Psoas muscle (tissue), 8 donors: ENCODE measurements at regions of chr13 and their contacts with region 1.

Region 1: GRCh38 chr13:110907951-110908898 is 6.6 kb downstream of the ANKRD10 start:
- DNase-seq: no peak
- ATAC-seq: peak in 3 of 4 donors; percentile 31 to 61 (median 38)
- H3K4me3 ChIP-seq: peak overlapping the region; percentile 40
- H3K27ac ChIP-seq: peak overlapping the region; percentile 99
- H3K4me1 ChIP-seq: peaks cover 83% of the 10 kb centered on the region
- H3K27me3 ChIP-seq: no peaks in the 10 kb centered on the region
- CTCF ChIP-seq: no peak

Region 2: DNA sequence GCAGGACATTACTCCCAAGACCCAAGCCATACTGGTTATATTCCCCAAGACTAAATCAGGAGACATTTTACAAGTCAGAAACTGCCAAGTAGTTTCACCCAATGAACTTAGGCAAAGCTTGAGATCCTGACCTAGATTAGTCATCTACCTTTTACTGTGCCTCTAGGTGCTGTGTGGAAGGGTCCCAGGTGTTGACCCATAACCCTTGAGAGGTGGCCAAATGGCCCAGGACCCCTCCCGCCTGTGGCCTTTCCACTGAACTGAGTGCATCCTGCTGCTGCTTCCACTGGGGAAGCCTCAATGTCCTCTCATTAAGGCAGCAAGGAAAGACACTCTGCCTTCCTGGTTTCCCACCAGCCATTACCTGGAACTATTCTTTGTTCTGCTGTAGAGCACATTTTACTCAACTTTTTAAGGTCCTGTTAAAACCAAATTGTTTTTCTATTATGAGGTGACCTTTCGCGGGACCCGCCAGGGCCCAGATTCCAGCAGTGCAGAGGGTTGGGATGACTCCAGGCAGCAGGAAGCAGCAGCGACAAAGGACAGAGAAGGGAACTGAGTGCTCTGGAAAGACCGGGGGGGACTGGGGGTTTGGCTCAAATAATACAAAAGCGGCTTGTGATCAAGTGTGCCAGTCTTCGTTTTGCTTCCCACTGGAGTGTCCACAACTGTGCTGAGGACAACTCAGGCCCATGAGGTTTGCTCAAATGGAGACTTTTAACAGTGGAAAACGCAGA is 20.5 kb before region 1 on chr13:
- intact Hi-C with region 1: loop called in 1 of 2 experiments (anchors 2 kb)
- DNase-seq: no peak
- ATAC-seq: peak; percentile 49 to 63 (median 52)
- H3K4me3 ChIP-seq: no peak overlapping the region
- H3K27ac ChIP-seq: peak overlapping the region; percentile 67
- H3K4me1 ChIP-seq: peaks cover 43% of the 10 kb centered on the region
- H3K27me3 ChIP-seq: no peaks in the 10 kb centered on the region
- CTCF ChIP-seq: no peak

Region 3: GRCh38 chr13:111304041-111304544 is 395.9 kb after region 1 on chr13:
- intact Hi-C with region 1: no loop called
- DNase-seq: no peak
- ATAC-seq: no peak
- H3K4me3 ChIP-seq: no peak overlapping the region
- H3K27ac ChIP-seq: no peak overlapping the region
- H3K4me1 ChIP-seq: no peaks in the 10 kb centered on the region
- H3K27me3 ChIP-seq: no peaks in the 10 kb centered on the region
- CTCF ChIP-seq: no peak